Heart right ventricle (tissue), 16 donors: ENCODE measurements at regions of chr3 and their contacts with region 1.

Region 1: DNA sequence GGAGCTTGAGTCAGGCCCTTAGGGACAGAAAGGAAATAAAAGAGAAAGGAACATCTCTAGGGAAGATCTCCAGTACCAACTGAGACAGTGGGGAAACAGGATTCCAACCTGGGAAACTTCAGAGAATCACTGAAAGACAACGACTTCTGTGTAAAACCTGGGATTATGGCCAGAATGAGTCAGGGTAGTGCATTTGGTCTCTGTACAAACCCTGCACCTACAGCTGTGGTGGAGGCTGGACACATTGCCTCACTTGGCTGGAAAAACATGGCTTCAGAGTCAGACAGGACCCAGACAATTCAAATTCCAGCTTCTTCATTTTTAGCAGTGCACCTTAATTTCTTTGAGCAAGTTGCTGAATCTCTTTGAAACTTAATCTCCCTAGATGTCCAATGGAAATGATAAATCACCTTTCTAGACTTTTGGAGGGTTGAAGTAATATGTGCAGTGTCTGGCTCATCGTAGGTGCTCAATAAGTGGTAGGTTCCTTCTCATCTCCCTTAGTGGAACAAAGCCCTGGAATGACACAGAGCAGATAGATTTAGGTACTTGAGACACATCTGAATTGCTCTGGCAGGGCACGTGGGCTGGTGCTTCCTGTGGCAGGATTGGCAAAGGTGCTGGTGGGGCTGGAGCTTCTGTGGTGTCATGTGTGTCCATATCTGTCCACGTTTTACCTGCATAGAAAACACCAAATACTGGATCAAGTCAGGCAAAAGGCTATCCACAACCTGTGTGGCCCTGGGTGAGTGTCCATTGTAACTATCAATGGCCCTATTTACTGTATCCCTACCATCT is 6.1 kb upstream of the CLSTN2 start:
- DNase-seq: no peak
- ATAC-seq: no peak
- H3K4me3 ChIP-seq: no peak overlapping the region
- H3K27ac ChIP-seq: no peak overlapping the region
- H3K4me1 ChIP-seq: no peaks in the 10 kb centered on the region
- H3K27me3 ChIP-seq: peaks cover 0 to 19% (median 11%) of the 10 kb centered on the region in 7 donors
- CTCF ChIP-seq: no peak

Region 2: GRCh38 chr3:139447486-139447885 is 481.4 kb before region 1 on chr3:
- intact Hi-C with region 1: no loop called
- DNase-seq: no peak
- ATAC-seq: no peak
- H3K4me3 ChIP-seq: no peak overlapping the region
- H3K27ac ChIP-seq: no peak overlapping the region
- H3K4me1 ChIP-seq: no peaks in the 10 kb centered on the region
- H3K27me3 ChIP-seq: no peaks in the 10 kb centered on the region
- CTCF ChIP-seq: no peak

Region 3: GRCh38 chr3:139728414-139728813 is 200.5 kb before region 1 on chr3:
- intact Hi-C with region 1: loop called in 2 of 10 experiments (anchors 5 to 10 kb)
- DNase-seq: no peak
- ATAC-seq: no peak
- H3K4me3 ChIP-seq: no peak overlapping the region
- H3K27ac ChIP-seq: no peak overlapping the region
- H3K4me1 ChIP-seq: no peaks in the 10 kb centered on the region
- H3K27me3 ChIP-seq: peaks cover 0 to under 1% (median 0%) of the 10 kb centered on the region in 7 donors
- CTCF ChIP-seq: no peak

Region 4: GRCh38 chr3:139953131-139953910 is 24.4 kb after region 1 on chr3:
- intact Hi-C with region 1: loop called in 1 of 10 experiments (anchors 1 kb)
- DNase-seq: no peak
- ATAC-seq: no peak
- H3K4me3 ChIP-seq: no peak overlapping the region
- H3K27ac ChIP-seq: no peak overlapping the region
- H3K4me1 ChIP-seq: peaks cover 0 to 5% (median 0%) of the 10 kb centered on the region in 9 donors
- H3K27me3 ChIP-seq: peaks cover 0 to 3% (median 0%) of the 10 kb centered on the region in 7 donors
- CTCF ChIP-seq: no peak